ENCODE measurements at regions of chr9 and their contacts with region 1.

Region 1: GRCh38 chr9:130107234-130107861 is 53.6 kb downstream of the GPR107 start:
- DNase-seq: peak; percentile 71 to 79 (median 79)
- ATAC-seq: peak; percentile 85 to 92 (median 86)
- H3K4me3 ChIP-seq: no peak overlapping the region
- H3K27ac ChIP-seq: no peak overlapping the region
- H3K4me1 ChIP-seq: no peaks in the 10 kb centered on the region
- H3K27me3 ChIP-seq: no peaks in the 10 kb centered on the region
- CTCF ChIP-seq: peak; percentile 73 to 81 (median 75)
- POLR2A ChIP-seq: no peak

Region 2: DNA sequence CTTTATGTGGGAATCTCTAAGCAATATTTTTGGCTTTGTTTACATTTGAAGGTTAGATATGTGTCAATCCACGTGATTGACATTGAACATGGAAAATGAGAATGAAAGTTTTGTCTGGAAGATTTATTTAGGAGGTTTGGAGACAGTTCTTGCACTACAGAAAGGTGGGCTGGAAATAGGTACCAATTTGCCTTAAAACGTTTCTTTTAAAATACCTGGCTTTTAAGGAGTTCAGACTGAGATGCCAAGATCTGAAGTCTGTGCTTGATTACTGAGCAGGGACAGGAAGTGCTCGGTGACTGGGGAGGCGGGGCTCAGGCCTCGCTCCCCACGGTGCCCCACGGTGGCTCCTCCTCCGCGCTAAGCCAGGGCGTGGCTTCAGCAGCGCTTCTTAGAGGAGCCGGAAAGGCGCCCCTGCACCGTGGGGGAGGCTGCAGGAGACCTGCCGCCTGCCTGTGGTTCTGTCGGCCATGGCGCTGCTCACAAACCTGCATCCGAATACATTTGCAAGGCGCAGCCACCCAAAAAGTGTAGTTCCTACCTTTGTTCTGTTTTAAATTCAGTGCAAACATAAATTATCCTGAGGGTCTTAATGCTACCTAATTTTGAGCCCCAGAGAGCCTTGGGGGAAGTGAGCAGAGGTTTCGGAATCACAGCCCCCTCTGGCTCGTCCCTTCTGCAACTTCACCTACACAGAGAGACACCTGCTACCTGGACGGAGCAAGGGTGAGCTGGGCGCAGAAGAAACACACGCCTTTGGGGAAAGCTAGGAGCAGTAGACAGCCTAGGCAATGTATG is 222.9 kb before region 1 on chr9:
- intact Hi-C with region 1: loop called in 1 of 2 experiments (anchors 10 kb)
- DNase-seq: peak; percentile 89 to 93 (median 92)
- ATAC-seq: peak; percentile 81 to 88 (median 86)
- H3K4me3 ChIP-seq: peak overlapping the region; percentile 12 to 49 (median 26)
- H3K27ac ChIP-seq: peak overlapping the region; percentile 28 to 68 (median 60)
- H3K4me1 ChIP-seq: peaks cover 0 to 25% (median 2%) of the 10 kb centered on the region in 4 donors
- H3K27me3 ChIP-seq: no peaks in the 10 kb centered on the region
- CTCF ChIP-seq: no peak
- POLR2A ChIP-seq: peak; percentile 31

Region 3: GRCh38 chr9:130235897-130236668 is 128.7 kb after region 1 on chr9:
- intact Hi-C with region 1: loop called (anchors 2 to 5 kb)
- DNase-seq: peak; percentile 53 to 71 (median 63)
- ATAC-seq: peak; percentile 18 to 47 (median 34)
- H3K4me3 ChIP-seq: no peak overlapping the region
- H3K27ac ChIP-seq: no peak overlapping the region
- H3K4me1 ChIP-seq: peaks cover 0 to 7% (median 1%) of the 10 kb centered on the region in 4 donors
- H3K27me3 ChIP-seq: no peaks in the 10 kb centered on the region
- CTCF ChIP-seq: peak; percentile 95 to 99 (median 97)
- POLR2A ChIP-seq: no peak